Activated CD8-positive, alpha-beta T cell treated with anti-CD3 and anti-CD28 coated beads for 36 hours (primary cell): ENCODE measurements at regions of chr1 and their contacts with region 1.

Region 1: GRCh38 chr1:101357444-101357986 is 120.7 kb downstream of the S1PR1 start:
- DNase-seq: peak; percentile 72
- ATAC-seq: peak; percentile 99
- H3K4me3 Mint-ChIP-seq: no peak overlapping the region
- H3K27ac Mint-ChIP-seq: no peak overlapping the region
- H3K4me1 Mint-ChIP-seq: peaks cover 10% of the 10 kb centered on the region
- H3K27me3 Mint-ChIP-seq: no peaks in the 10 kb centered on the region
- CTCF ChIP-seq: peak; percentile 92

Region 2: DNA sequence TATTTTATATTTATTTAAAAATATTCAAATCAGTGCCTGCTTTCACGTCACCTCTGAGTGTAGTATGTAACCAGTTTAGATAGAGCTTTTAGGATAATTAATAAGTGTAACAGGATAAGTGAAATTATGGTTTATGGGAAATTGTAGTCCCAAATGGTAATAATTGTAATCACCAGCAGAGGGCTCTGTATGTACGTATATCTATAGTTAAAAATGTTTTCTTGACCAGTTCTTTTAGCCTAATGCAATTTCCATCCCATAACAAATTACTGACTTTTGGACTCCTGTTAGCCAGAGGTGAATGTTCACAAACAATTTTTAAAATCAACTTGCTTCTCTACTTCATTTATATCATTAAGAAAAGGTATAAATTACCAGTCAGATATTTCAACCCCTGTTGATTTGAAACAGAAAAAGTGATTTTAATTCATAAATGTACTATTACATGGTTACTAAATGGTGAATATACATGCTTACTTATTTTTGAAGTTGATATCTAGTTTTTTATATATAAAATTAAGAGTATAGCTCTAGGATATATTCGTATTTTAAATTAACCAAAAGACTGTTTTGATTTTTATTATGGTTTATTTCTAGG is 436.3 kb before region 1 on chr1:
- CTCF ChIA-PET with region 1: interaction called, 9 read pairs
- POLR2A ChIA-PET with region 1: no interaction called
- intact Hi-C with region 1: loop called (anchors 5 kb)
- DNase-seq: no peak
- ATAC-seq: no peak
- H3K4me3 Mint-ChIP-seq: no peak overlapping the region
- H3K27ac Mint-ChIP-seq: peak overlapping the region; percentile 64
- H3K4me1 Mint-ChIP-seq: peaks cover 53% of the 10 kb centered on the region
- H3K27me3 Mint-ChIP-seq: no peaks in the 10 kb centered on the region
- CTCF ChIP-seq: peak; percentile 93

Region 3: GRCh38 chr1:101247404-101248287 is 109.9 kb before region 1 on chr1:
- CTCF ChIA-PET with region 1: interaction called, 5 read pairs
- POLR2A ChIA-PET with region 1: interaction called, 3 read pairs
- intact Hi-C with region 1: loop called (anchors 10 kb)
- DNase-seq: no peak
- ATAC-seq: no peak
- H3K4me3 Mint-ChIP-seq: peak overlapping the region; percentile 1
- H3K27ac Mint-ChIP-seq: peak overlapping the region; percentile 44
- H3K4me1 Mint-ChIP-seq: peaks cover 64% of the 10 kb centered on the region
- H3K27me3 Mint-ChIP-seq: no peaks in the 10 kb centered on the region
- CTCF ChIP-seq: no peak

Region 4: DNA sequence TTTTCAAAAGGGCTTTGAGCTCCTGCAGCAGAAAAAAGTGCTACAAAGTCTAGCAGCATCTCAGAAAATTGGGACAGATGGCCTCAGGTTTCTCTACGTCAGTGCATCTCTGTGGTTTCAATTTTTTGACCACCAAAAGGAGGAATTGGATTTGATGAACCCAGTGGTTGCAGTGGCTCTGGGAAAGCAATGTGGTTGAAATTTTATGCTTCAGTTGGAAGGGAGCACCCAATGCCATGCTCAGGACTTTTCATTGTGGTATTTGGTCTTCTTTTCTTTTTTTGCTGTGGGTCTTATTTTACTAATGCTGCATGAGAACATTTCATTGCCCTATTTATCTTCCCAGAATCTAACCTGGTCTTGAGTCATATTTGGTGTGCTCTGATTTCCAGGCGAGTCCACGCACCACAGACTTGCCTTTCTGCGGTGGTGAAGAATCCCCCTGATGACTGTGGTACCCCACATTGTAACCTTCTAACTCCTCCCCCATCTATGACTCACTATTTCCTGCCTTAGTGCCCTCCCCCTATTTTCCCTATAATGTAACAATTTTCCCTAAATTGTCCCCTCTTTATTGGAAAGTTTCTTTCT is 64.0 kb before region 1 on chr1:
- CTCF ChIA-PET with region 1: interaction called, 15 read pairs
- POLR2A ChIA-PET with region 1: interaction called, 3 read pairs
- intact Hi-C with region 1: no loop called
- DNase-seq: peak; percentile 88
- ATAC-seq: peak; percentile 47
- H3K4me3 Mint-ChIP-seq: peak overlapping the region; percentile 56
- H3K27ac Mint-ChIP-seq: peak overlapping the region; percentile 87
- H3K4me1 Mint-ChIP-seq: peaks cover 71% of the 10 kb centered on the region
- H3K27me3 Mint-ChIP-seq: peaks cover 2% of the 10 kb centered on the region
- CTCF ChIP-seq: no peak

Region 5: GRCh38 chr1:101317590-101317989 is 39.9 kb before region 1 on chr1:
- CTCF ChIA-PET with region 1: interaction called, 153 read pairs
- POLR2A ChIA-PET with region 1: interaction called, 3 read pairs
- intact Hi-C with region 1: no loop called
- DNase-seq: peak; percentile 30
- ATAC-seq: no peak
- H3K4me3 Mint-ChIP-seq: no peak overlapping the region
- H3K27ac Mint-ChIP-seq: no peak overlapping the region
- H3K4me1 Mint-ChIP-seq: peaks cover 22% of the 10 kb centered on the region
- H3K27me3 Mint-ChIP-seq: no peaks in the 10 kb centered on the region
- CTCF ChIP-seq: no peak

Region 6: GRCh38 chr1:101330427-101331130 is 26.9 kb before region 1 on chr1:
- CTCF ChIA-PET with region 1: interaction called, 13 read pairs
- POLR2A ChIA-PET with region 1: interaction called, 4 read pairs
- intact Hi-C with region 1: no loop called
- DNase-seq: no peak
- ATAC-seq: no peak
- H3K4me3 Mint-ChIP-seq: no peak overlapping the region
- H3K27ac Mint-ChIP-seq: no peak overlapping the region
- H3K4me1 Mint-ChIP-seq: peaks cover 18% of the 10 kb centered on the region
- H3K27me3 Mint-ChIP-seq: peaks cover 2% of the 10 kb centered on the region
- CTCF ChIP-seq: no peak

Region 7: DNA sequence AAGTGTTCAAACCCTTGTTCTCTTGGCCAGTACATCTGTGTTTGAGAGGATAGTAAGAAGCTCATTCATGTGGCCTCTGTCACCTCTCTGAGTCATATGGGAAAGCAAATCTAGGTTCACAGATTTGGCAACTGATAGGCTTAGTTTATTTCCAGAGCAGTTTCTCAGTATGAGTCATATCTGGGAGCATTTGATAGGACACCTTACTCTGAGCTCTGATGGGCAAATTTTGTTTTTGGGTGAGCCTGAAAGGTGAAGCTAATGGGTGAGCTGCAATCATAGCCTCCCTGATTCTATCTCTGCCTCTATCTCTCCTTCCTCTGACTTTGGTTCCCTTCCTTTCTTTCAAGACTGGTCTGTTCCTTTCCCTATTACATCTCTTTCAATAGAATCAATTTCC is 13.7 kb after region 1 on chr1:
- CTCF ChIA-PET with region 1: interaction called, 31 read pairs
- POLR2A ChIA-PET with region 1: no interaction called
- intact Hi-C with region 1: no loop called
- DNase-seq: peak; percentile 42
- ATAC-seq: peak; percentile 96
- H3K4me3 Mint-ChIP-seq: no peak overlapping the region
- H3K27ac Mint-ChIP-seq: no peak overlapping the region
- H3K4me1 Mint-ChIP-seq: peaks cover 10% of the 10 kb centered on the region
- H3K27me3 Mint-ChIP-seq: no peaks in the 10 kb centered on the region
- CTCF ChIP-seq: no peak

Region 8: DNA sequence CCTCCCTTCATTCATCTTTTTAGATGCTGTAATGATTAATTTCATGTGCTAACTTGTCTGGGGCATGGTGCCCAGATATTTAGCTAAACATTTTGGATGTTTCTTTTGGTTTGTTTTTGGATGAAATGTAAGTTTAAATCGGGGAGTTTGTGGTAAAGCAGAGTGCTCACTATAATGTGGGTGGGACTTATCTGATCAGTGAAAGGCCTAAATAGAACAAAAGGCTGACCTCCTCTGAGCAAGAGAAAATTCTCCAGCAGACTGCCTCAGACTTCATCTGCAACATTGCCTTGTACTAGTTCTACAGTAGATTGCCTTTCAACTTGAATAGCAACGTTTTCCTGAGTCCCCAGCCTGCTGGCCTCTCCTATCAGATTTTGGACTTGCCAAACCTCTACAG is 62.9 kb after region 1 on chr1:
- CTCF ChIA-PET with region 1: no interaction called
- POLR2A ChIA-PET with region 1: no interaction called
- intact Hi-C with region 1: no loop called
- DNase-seq: no peak
- ATAC-seq: no peak
- H3K4me3 Mint-ChIP-seq: no peak overlapping the region
- H3K27ac Mint-ChIP-seq: no peak overlapping the region
- H3K4me1 Mint-ChIP-seq: no peaks in the 10 kb centered on the region
- H3K27me3 Mint-ChIP-seq: no peaks in the 10 kb centered on the region
- CTCF ChIP-seq: no peak

Region 9: DNA sequence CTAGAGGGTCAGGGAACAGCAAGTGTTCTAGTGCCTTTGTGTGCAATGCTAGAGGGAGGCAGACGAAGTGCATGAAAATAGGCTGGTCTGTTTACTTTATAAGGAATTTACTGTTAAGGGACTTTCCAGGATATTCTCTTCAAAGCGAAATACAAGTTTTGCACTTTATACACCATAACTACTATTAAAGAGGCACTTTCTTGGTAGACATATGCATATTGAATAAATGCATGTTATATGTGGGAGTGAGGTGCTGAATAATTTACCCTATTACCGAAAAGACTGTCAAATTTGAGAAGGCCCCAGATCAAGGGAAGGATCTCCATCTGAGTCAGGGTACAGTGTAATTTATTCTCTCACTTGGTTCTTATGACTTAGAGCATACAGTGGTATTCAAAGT is 189.8 kb after region 1 on chr1:
- CTCF ChIA-PET with region 1: no interaction called
- POLR2A ChIA-PET with region 1: no interaction called
- intact Hi-C with region 1: no loop called
- DNase-seq: no peak
- ATAC-seq: no peak
- H3K4me3 Mint-ChIP-seq: no peak overlapping the region
- H3K27ac Mint-ChIP-seq: no peak overlapping the region
- H3K4me1 Mint-ChIP-seq: no peaks in the 10 kb centered on the region
- H3K27me3 Mint-ChIP-seq: no peaks in the 10 kb centered on the region
- CTCF ChIP-seq: no peak